ENCODE measurements at regions of chr10 and their contacts with region 1.

Region 1: DNA sequence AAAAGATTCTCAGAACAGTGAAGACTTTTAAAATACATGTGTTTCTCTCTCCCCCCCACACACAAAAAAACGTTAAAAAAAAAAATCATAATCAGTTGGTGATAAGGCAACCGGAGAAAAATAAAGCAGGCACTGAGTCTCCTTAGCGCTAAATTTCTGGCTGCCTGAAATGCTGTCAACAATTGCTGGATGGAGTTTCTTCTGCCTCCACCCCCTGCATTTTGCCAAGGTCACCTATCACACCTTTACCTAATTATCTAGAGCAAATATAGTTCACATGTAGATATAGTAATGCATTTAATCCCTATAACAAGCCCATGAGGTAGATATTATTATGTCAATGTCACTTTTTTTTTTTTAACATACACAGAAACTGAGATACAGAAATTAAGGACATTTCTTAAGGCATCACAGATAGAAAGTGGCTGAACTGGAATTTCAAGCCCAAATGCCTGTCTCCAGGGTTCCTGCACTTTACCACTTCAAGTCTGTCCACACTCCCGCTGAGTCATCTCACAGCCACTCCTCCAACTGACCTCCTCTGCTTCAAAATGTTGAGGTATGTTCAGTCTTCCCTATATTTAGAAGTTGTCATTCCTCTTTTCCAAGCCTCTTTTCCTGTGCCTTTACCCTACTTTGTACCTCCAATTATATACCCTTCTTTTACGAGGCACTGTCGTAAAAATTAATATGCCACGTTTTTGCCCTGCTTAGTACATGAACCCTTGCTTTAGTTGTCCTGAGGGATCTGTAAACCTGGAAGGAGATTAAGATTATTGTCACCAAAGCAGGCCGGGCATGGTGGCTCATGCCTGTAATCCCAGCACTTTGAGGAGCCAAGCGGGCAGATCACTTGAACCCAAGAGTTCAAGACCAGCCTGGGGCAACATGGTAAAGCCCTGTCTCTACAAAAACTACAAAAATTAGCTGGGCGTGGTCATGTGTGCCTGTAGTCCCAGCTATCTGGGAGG is 72.8 kb upstream of the MPP7 start:
- DNase-seq: peak in 2 of 3 donors; percentile 51 to 59
- ATAC-seq: peak; percentile 97
- H3K4me3 ChIP-seq: no peak overlapping the region
- H3K4me1 ChIP-seq: no peaks in the 10 kb centered on the region
- CTCF ChIP-seq: no peak

Region 2: DNA sequence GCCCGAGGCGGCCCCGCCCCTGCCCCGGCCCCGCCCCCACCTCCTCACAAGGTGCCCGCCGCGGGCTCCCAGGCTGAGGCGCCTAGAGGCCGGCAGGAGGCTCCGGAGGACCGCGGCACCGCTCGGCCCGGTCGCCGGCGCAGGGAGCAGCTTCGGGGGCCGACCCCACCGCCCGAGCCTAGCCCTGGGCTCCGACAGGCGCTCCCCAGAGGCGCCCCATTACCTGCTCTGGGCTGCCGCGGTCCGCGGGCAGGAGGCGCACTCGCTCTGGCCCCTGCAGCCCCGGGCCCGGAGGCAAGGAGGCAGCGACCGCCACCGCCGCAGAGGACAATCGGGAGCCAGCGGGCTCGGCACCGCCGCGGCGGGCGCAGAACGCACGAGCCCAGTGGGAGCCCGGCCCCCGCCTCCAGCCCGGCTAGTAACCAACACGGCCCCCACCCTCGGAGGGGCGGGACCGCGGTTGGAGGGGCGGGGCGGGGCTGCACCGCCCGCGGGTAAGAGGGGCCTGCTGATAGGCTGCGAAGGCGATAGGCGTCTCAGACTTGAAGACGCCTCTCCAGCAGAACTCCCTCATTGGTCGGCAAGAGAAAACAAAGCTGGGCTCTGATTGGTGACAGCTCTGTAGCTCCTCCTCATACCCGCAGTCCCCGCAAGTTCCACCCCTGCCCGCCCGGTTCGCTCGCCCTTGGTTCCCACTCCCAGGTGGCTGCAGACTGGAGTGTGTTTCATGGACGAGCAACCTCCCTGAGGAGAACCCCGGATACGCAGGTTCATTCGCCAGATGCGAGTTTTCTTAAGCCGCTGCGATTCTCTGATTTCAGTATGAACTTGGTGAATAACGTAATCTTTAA is 72.8 kb before region 1 on chr10 and contains the start of gene MPP7:
- intact Hi-C with region 1: loop called (anchors 10 kb)
- DNase-seq: peak; percentile 96 to 97 (median 97)
- ATAC-seq: peak; percentile 98
- H3K4me3 ChIP-seq: peak within 1 kb of the TSS; percentile 70
- H3K4me1 ChIP-seq: no peaks in the 10 kb centered on the region
- CTCF ChIP-seq: peak; percentile 33
- total RNA-seq, gene MPP7: 32.7 to 45.8 (median 38.7) TPM

Region 3: GRCh38 chr10:28432210-28432676 is 56.6 kb after region 1 on chr10:
- intact Hi-C with region 1: no loop called
- DNase-seq: peak in 2 of 3 donors; percentile 34 to 60
- ATAC-seq: peak; percentile 96
- H3K4me3 ChIP-seq: no peak overlapping the region
- H3K4me1 ChIP-seq: no peaks in the 10 kb centered on the region
- CTCF ChIP-seq: peak; percentile 62